ENCODE measurements at regions of chr16 and their contacts with region 1.

Region 1: GRCh38 chr16:401468-402348 is at the start of gene DECR2:
- DNase-seq: peak; percentile 98
- ATAC-seq: peak; percentile 89 to 94 (median 92)
- H3K4me3 ChIP-seq: peak within 1 kb of the TSS; percentile 76
- H3K27ac ChIP-seq: peak within 1 kb of the TSS; percentile 95
- H3K4me1 ChIP-seq: peaks cover 21% of the 10 kb centered on the region
- H3K27me3 ChIP-seq: no peaks in the 10 kb centered on the region
- CTCF ChIP-seq: peak; percentile 38
- total RNA-seq, gene DECR2: 13.9 to 22.9 (median 19.6) TPM

Region 2: GRCh38 chr16:527006-527753 is 125.5 kb after region 1 on chr16 and contains the start of gene CAPN15:
- intact Hi-C with region 1: loop called in 1 of 2 experiments (anchors 5 kb)
- DNase-seq: peak; percentile 89 to 95
- ATAC-seq: peak; percentile 80 to 84 (median 81)
- H3K4me3 ChIP-seq: peak within 1 kb of the TSS; percentile 87
- H3K27ac ChIP-seq: peak within 1 kb of the TSS; percentile 100
- H3K4me1 ChIP-seq: peaks cover 42% of the 10 kb centered on the region
- H3K27me3 ChIP-seq: no peaks in the 10 kb centered on the region
- CTCF ChIP-seq: no peak
- total RNA-seq, gene CAPN15: 15.5 to 32.1 (median 26.8) TPM